ENCODE measurements at regions of chr9 and their contacts with region 1.

Region 1: DNA sequence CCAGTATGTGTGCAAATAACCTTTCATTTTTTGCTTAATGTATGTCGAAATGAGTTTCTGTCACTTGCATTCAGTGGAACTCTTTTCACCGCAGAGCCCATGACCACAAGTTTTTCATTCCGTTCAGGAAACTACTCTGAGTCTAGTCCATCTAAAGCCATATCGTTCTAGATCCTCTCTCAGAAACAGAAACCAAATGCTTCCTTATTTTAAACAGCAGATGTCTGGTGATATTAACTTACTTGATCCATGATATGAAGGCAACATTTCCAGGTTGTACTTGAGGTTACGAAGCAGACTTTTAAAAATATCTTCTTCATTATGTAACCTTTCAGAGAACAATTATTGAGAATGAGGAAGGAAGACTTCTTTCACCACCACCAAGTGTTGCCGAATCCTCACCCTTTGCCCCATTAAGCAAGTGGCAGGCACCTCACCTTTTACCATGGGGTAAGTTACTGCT is 72.4 kb upstream of the GNAQ start:
- DNase-seq: peak in 4 of 5 donors; percentile 15 to 58 (median 41)
- H3K4me3 ChIP-seq: no peak overlapping the region
- H3K4me3 Mint-ChIP-seq: peak overlapping the region; percentile 2 to 73 (median 63)
- H3K27ac ChIP-seq: no peak overlapping the region
- H3K27ac Mint-ChIP-seq: peak overlapping the region in 5 of 7 donors; percentile 2 to 90 (median 73)
- H3K4me1 ChIP-seq: peaks cover 21% of the 10 kb centered on the region
- H3K4me1 Mint-ChIP-seq: peaks cover 24 to 52% (median 49%) of the 10 kb centered on the region in 4 donors
- H3K27me3 ChIP-seq: no peaks in the 10 kb centered on the region
- H3K27me3 Mint-ChIP-seq: no peaks in the 10 kb centered on the region

Region 2: GRCh38 chr9:78074385-78075291 is 29.4 kb before region 1 on chr9:
- CTCF ChIA-PET with region 1: no interaction called
- POLR2A ChIA-PET with region 1: interaction called, 5 read pairs
- intact Hi-C with region 1: loop called (anchors 2 kb)
- DNase-seq: peak; percentile 31 to 55 (median 48)
- H3K4me3 ChIP-seq: peak overlapping the region in 1 of 2 donors; percentile 44
- H3K4me3 Mint-ChIP-seq: peak overlapping the region; percentile 62 to 89 (median 80)
- H3K27ac ChIP-seq: peak overlapping the region; percentile 7
- H3K27ac Mint-ChIP-seq: peak overlapping the region; percentile 80 to 96 (median 91)
- H3K4me1 ChIP-seq: peaks cover 40% of the 10 kb centered on the region
- H3K4me1 Mint-ChIP-seq: peaks cover 45 to 60% (median 54%) of the 10 kb centered on the region in 4 donors
- H3K27me3 ChIP-seq: no peaks in the 10 kb centered on the region
- H3K27me3 Mint-ChIP-seq: no peaks in the 10 kb centered on the region

Measured in CD4-positive, alpha-beta memory T cell (primary cell).